Colonic mucosa (tissue), 4 donors: ENCODE measurements at regions of chr14 and their contacts with region 1.

Region 1: DNA sequence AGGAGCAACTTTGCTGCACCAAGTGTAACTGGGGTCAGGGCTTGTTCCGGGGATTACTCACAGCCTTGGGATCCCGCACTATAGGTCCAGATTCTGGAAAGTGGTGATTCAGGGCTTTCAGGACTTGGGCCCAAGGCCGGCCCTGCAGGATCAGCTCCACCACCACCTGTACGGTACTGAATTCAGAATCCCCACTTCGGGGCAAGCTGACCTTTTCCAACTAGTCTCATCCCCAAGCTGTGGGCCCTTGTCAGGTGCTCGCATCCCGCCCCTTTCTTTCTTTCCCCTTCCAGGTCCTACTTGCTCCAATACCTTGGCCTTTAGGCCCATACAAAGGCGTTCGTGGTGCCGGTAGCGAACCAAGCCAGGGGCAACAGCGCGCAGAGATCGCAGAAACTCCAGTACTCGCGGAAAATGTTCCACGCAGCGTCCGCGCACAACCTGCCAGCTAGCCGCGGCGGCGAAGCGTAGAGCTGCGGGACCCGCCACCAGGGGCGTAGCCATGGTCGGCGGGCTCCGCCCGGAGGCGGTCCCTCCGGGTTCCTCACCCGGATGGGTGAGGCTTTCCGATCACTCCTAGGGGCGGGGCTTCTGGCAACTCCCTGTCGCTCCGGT is 487 bp downstream of the TINF2 start:
- DNase-seq: peak; percentile 94
- H3K4me3 ChIP-seq: peak overlapping the region; percentile 79
- H3K27ac ChIP-seq: peak overlapping the region; percentile 99
- H3K4me1 ChIP-seq: peaks cover 11% of the 10 kb centered on the region
- H3K27me3 ChIP-seq: no peaks in the 10 kb centered on the region
- CTCF ChIP-seq: peak; percentile 71

Region 2: DNA sequence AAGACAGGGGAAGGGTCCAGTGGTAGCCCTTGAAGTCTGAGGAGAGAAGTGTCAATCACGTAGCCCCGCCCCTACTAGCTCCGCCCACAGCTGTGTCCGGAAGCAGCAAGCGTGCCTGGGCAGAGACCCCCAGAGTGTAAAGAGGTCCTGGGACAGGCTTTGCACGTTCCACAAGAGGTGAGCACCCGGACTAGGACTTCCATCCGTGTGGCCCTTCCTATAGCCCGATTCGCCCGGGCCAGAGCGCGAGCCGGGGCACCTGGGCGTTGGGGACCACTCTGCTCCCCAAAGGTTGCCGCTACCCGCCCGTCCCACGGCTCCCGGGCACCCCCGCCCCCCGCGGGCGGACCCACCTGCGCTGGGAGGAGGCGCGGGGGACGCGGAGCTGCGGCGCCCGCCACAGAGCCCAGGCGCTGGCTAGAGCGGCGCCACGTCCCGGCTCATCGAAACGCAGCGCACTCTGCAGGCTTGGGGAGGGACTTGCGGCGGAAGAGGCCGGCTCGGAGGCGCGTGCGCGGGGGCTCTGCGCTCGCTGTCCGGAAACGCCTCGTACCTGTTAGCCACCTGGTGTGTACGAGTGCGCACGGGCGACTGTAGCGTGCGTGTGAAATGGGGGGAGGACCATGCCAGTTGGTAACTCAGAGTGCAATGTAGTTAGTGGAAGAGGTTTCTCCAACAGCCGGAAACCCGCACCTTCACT is 29.3 kb after region 1 on chr14 and contains the start of gene RABGGTA:
- intact Hi-C with region 1: loop called (anchors 2 kb)
- DNase-seq: peak; percentile 88
- H3K4me3 ChIP-seq: peak within 1 kb of the TSS; percentile 75
- H3K27ac ChIP-seq: peak within 1 kb of the TSS; percentile 95
- H3K4me1 ChIP-seq: no peaks in the 10 kb centered on the region
- H3K27me3 ChIP-seq: no peaks in the 10 kb centered on the region
- CTCF ChIP-seq: peak; percentile 69
- total RNA-seq, gene RABGGTA: 37.3 to 38.3 TPM

Region 3: DNA sequence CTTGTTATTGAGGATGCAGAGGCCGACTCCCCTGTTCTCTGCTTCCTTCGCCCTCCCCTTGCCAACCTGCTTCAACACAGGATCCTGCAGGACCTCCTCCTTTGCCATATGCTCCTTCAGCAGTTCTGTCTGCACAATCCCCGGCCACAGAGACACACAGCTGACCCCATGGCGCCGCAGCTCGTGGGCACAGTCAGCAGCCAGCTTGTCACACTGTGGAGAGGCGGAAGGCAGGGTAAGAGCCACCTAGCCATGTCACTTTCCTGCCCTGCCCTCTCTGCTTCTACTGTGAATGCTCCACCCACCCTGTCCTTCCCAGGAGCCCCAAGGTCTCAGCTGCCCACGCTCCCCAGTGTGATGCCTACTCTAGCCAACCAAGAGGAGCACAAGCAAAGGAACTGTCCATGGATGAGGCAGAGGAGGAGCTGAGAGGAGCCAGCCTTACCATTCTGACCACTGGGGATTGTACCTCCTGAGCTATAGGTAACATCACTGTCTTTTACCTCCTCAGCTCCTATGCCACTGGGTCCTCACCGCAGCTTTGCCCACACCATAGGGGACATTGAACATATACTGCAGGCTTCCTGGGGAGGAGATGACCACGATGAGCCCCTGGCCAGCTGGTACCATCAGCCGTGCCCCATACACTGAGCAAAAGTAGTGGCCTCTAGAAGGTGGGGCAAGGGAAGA is 50.3 kb after region 1 on chr14:
- intact Hi-C with region 1: loop called (anchors 2 kb)
- DNase-seq: no peak
- H3K4me3 ChIP-seq: no peak overlapping the region
- H3K27ac ChIP-seq: no peak overlapping the region
- H3K4me1 ChIP-seq: peaks cover 7% of the 10 kb centered on the region
- H3K27me3 ChIP-seq: no peaks in the 10 kb centered on the region
- CTCF ChIP-seq: no peak

Region 4: DNA sequence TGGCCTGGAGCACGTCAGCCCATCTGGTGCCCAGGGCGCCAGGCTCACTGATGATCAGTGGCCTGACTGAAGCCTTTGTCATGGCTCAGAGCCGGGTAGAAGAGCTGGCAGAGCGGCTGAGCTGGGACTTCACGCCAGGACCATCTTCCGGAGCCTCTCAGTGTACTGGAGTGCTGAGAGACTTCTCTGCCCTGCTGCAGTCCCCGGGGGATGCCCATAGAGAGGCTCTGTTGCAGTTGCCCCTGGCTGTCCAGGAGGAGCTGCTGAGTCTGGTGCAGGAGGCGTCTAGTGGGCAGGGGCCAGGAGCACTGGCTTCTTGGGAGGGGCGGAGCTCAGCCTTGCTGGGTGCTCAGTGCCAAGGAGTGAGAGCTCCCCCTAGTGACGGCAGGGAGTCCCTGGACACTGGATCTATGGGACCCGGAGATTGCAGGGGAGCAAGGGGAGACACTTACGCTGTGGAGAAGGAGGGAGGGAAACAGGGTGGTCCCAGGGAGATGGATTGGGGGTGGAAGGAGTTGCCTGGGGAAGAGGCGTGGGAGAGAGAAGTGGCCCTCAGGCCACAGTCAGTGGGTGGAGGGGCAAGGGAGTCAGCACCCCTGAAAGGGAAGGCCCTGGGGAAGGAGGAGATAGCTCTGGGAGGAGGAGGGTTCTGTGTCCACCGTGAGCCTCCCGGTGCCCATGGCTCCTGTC is 189.8 kb after region 1 on chr14:
- intact Hi-C with region 1: loop called (anchors 10 kb)
- DNase-seq: peak; percentile 96
- H3K4me3 ChIP-seq: peak overlapping the region; percentile 74
- H3K27ac ChIP-seq: peak overlapping the region; percentile 92
- H3K4me1 ChIP-seq: peaks cover 21% of the 10 kb centered on the region
- H3K27me3 ChIP-seq: no peaks in the 10 kb centered on the region
- CTCF ChIP-seq: peak; percentile 81